Naive thymus-derived CD4-positive, alpha-beta T cell (primary cell): ENCODE measurements at regions of chr3 and their contacts with region 1.

Region 1: GRCh38 chr3:52220380-52221026 is 4.9 kb downstream of the TLR9 start:
- DNase-seq: peak; percentile 75 to 90 (median 83)
- ATAC-seq: peak; percentile 88
- H3K4me3 ChIP-seq: peak overlapping the region; percentile 28
- H3K4me3 Mint-ChIP-seq: peak overlapping the region; percentile 39 to 77 (median 64)
- H3K27ac ChIP-seq: no peak overlapping the region
- H3K27ac Mint-ChIP-seq: peak overlapping the region; percentile 65 to 90 (median 77)
- H3K4me1 ChIP-seq: peaks cover 76 to 88% of the 10 kb centered on the region in 2 donors
- H3K4me1 Mint-ChIP-seq: peaks cover 65 to 95% (median 80%) of the 10 kb centered on the region in 7 donors
- H3K27me3 ChIP-seq: no peaks in the 10 kb centered on the region
- H3K27me3 Mint-ChIP-seq: no peaks in the 10 kb centered on the region

Region 2: DNA sequence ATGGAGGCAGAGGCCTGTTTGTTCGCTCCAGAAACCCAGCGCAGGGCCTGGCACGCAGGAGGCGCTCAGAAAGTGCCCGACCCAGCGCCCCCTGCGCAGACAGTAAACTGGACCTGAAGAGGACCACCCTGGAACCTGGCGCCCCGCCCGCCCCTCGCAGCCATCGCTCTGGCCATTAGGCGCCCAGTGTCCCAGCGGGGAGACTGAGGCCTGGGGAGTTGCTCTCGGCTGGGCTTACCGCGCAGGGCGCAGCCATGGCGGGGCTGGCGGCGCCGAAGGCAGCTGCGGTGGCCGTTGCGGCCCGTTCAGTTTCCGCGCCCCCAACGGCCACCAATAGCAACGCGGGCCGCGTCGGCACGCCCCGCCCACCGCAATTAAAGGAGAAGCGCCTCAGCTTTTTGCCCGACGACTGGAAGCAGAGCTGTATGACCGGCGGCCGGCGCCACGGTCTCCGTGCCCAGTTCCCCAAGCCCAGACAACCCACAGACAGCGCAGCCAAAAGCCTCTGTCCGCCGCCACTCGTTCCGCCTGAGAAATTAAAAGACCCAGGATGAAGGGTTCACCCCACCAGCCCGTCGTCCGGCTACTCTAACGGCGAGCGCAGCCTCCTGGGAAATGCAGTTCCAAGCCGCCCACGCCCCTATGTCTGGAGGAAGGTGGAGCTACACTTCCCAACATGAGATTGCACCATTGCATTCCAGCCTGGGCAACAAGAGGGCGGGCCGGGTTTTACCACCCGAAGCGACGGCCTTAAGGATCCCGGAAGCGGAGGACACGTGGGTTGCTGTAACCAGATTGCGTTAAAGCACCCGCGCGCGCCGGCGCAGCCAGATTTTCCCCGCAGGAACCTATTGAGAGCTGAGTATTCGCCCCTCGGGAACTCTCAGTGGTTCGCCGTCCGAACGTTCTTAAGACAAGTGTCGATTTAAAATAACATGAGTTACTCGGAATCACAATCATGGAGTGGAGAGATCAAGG is 66.1 kb before region 1 on chr3 and contains the start of gene POC1A:
- CTCF ChIA-PET with region 1: interaction called, 5 read pairs
- POLR2A ChIA-PET with region 1: no interaction called
- intact Hi-C with region 1: loop called (anchors 1 to 10 kb)
- DNase-seq: peak; percentile 73 to 90 (median 82)
- ATAC-seq: peak; percentile 92
- H3K4me3 ChIP-seq: peak within 1 kb of the TSS; percentile 98
- H3K4me3 Mint-ChIP-seq: peak within 1 kb of the TSS; percentile 88 to 98 (median 96)
- H3K27ac ChIP-seq: peak within 1 kb of the TSS; percentile 85
- H3K27ac Mint-ChIP-seq: peak within 1 kb of the TSS; percentile 87 to 98 (median 94)
- H3K4me1 ChIP-seq: peaks cover 4 to 6% of the 10 kb centered on the region in 2 donors
- H3K4me1 Mint-ChIP-seq: peaks cover 5 to 22% (median 6%) of the 10 kb centered on the region in 7 donors
- H3K27me3 ChIP-seq: no peaks in the 10 kb centered on the region
- H3K27me3 Mint-ChIP-seq: peaks cover 0 to 1% (median 0%) of the 10 kb centered on the region in 5 donors
- total RNA-seq, gene POC1A: 0.58 to 19.7 (median 1.2) TPM

Region 3: DNA sequence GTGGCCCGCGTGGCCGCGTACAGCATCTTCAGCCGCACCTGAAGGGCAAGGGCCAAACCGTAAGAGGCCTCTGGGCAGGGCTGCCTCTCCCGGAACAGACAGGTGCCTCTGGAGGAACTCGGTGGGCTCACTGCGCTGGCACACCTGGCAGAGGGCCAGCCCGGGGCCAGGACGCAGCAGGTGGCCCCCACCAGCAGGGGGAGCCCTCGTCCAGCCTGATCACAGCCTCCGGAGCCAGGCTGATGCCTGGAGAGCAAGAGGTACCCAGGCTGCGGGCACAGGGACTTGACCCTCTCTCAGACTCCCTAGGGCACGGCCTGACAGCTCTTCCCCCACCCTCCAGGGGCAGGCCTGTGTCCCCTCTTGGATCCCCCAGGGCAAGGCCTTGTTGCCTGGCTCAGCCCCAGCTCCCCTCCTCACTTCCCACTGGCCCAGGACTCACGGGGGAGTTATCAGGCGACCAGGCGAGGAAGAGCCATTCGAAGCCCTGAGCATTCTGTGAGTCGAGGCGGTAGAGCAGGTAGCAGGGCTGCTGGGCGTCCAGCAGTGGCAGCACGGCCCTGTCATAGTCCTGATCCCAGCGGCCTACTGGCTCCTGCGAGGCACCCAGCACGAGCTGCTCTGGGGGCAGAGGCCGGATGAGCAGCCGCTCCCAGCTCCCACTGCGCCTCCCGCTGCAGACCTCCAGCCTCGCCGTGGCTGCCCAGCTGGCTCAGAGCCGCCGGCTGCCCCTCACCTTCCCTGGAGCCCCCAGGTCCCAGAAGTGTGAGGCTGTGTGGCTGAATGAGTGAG is 11.2 kb after region 1 on chr3:
- CTCF ChIA-PET with region 1: interaction called, 71 read pairs
- POLR2A ChIA-PET with region 1: interaction called, 54 read pairs
- intact Hi-C with region 1: loop called in 1 of 2 experiments (anchors 1 kb)
- DNase-seq: peak; percentile 77 to 96 (median 88)
- ATAC-seq: peak; percentile 91
- H3K4me3 ChIP-seq: no peak overlapping the region
- H3K4me3 Mint-ChIP-seq: peak overlapping the region; percentile 20 to 69 (median 53)
- H3K27ac ChIP-seq: peak overlapping the region; percentile 42
- H3K27ac Mint-ChIP-seq: peak overlapping the region; percentile 32 to 88 (median 80)
- H3K4me1 ChIP-seq: peaks cover 22 to 35% of the 10 kb centered on the region in 2 donors
- H3K4me1 Mint-ChIP-seq: peaks cover 40 to 63% (median 58%) of the 10 kb centered on the region in 7 donors
- H3K27me3 ChIP-seq: no peaks in the 10 kb centered on the region
- H3K27me3 Mint-ChIP-seq: no peaks in the 10 kb centered on the region

Region 4: DNA sequence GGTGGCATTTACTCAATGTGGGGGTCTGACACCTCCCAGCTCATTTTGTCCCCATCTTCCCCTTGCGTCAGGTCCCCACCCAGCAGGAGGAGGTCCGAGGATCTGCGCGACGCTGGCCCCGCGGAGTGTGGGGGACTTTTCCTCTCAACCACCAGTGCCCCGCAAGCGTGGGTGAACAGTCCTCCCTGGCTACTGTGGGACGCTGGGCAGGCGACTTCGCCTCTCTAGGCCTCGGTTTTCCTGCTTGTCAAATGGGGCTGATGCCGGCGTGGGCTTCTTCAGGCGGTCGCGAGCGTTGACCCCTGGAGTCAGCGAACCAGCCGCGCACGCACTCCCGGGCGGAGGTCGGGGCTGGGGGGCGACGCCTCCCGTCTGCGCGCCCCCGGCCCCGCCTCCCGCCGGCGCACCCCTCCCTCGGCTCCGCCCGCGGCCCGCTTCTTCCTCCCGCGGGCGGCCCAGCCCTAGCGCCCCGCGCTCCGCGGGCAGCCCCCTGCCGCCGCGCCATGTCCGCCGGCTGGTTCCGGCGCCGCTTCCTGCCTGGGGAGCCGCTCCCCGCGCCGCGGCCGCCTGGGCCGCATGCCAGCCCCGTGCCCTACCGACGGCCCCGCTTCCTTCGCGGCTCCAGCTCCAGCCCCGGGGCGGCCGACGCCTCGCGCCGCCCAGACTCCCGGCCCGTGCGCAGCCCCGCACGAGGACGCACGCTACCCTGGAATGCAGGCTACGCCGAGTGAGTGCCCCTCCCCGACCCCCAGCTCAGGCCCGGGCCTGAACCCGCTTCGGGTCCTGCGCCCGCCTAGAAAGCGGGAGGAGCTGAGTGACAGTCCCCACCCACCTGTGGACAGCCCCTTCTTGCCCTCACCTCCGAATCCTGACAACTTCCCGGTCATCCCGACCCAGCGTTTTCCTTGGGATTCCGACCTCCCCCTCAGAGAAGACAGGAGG is 25.1 kb after region 1 on chr3 and contains the start of gene PPM1M:
- CTCF ChIA-PET with region 1: interaction called, 3 read pairs
- POLR2A ChIA-PET with region 1: interaction called, 29 read pairs
- intact Hi-C with region 1: no loop called
- DNase-seq: peak; percentile 57 to 77 (median 73)
- ATAC-seq: peak; percentile 72
- H3K4me3 ChIP-seq: peak within 1 kb of the TSS; percentile 79
- H3K4me3 Mint-ChIP-seq: peak within 1 kb of the TSS; percentile 83 to 91 (median 87)
- H3K27ac ChIP-seq: peak within 1 kb of the TSS; percentile 91
- H3K27ac Mint-ChIP-seq: peak within 1 kb of the TSS; percentile 83 to 99 (median 95)
- H3K4me1 ChIP-seq: peaks cover 48 to 81% of the 10 kb centered on the region in 2 donors
- H3K4me1 Mint-ChIP-seq: peaks cover 36 to 91% (median 84%) of the 10 kb centered on the region in 7 donors
- H3K27me3 ChIP-seq: no peaks in the 10 kb centered on the region
- H3K27me3 Mint-ChIP-seq: no peaks in the 10 kb centered on the region
- total RNA-seq, gene PPM1M: 55.8 to 81.0 (median 74.5) TPM

Region 5: GRCh38 chr3:52270252-52270754 is 49.8 kb after region 1 on chr3:
- CTCF ChIA-PET with region 1: interaction called, 10 read pairs
- POLR2A ChIA-PET with region 1: interaction called, 1,418 read pairs
- intact Hi-C with region 1: no loop called
- DNase-seq: no peak
- ATAC-seq: peak; percentile 28
- H3K4me3 ChIP-seq: peak overlapping the region; percentile 57
- H3K4me3 Mint-ChIP-seq: peak overlapping the region; percentile 68 to 99 (median 90)
- H3K27ac ChIP-seq: peak overlapping the region; percentile 96
- H3K27ac Mint-ChIP-seq: peak overlapping the region; percentile 79 to 99 (median 96)
- H3K4me1 ChIP-seq: peaks cover 42 to 67% of the 10 kb centered on the region in 2 donors
- H3K4me1 Mint-ChIP-seq: peaks cover 55 to 92% (median 87%) of the 10 kb centered on the region in 7 donors
- H3K27me3 ChIP-seq: no peaks in the 10 kb centered on the region
- H3K27me3 Mint-ChIP-seq: no peaks in the 10 kb centered on the region

Region 6: GRCh38 chr3:52444860-52445793 is 224.6 kb after region 1 on chr3 and contains the start of gene SEMA3G:
- CTCF ChIA-PET with region 1: interaction called, 4 read pairs
- POLR2A ChIA-PET with region 1: no interaction called
- intact Hi-C with region 1: loop called in 1 of 2 experiments (anchors 5 kb)
- DNase-seq: peak; percentile 39 to 78 (median 63)
- ATAC-seq: peak; percentile 94
- H3K4me3 ChIP-seq: no peak within 1 kb of the TSS
- H3K4me3 Mint-ChIP-seq: no peak within 1 kb of the TSS
- H3K27ac ChIP-seq: no peak within 1 kb of the TSS
- H3K27ac Mint-ChIP-seq: peak within 1 kb of the TSS in 1 of 9 donors; percentile 59
- H3K4me1 ChIP-seq: peaks cover 0 to 9% of the 10 kb centered on the region in 2 donors
- H3K4me1 Mint-ChIP-seq: peaks cover 6 to 13% (median 9%) of the 10 kb centered on the region in 7 donors
- H3K27me3 ChIP-seq: no peaks in the 10 kb centered on the region
- H3K27me3 Mint-ChIP-seq: no peaks in the 10 kb centered on the region
- total RNA-seq, gene SEMA3G: 0.10 to 0.24 TPM in 2 of 5 experiments, not detected in the others